Endothelial cell of umbilical vein (primary cell): ENCODE measurements at regions of chr4 and their contacts with region 1.

Region 1: DNA sequence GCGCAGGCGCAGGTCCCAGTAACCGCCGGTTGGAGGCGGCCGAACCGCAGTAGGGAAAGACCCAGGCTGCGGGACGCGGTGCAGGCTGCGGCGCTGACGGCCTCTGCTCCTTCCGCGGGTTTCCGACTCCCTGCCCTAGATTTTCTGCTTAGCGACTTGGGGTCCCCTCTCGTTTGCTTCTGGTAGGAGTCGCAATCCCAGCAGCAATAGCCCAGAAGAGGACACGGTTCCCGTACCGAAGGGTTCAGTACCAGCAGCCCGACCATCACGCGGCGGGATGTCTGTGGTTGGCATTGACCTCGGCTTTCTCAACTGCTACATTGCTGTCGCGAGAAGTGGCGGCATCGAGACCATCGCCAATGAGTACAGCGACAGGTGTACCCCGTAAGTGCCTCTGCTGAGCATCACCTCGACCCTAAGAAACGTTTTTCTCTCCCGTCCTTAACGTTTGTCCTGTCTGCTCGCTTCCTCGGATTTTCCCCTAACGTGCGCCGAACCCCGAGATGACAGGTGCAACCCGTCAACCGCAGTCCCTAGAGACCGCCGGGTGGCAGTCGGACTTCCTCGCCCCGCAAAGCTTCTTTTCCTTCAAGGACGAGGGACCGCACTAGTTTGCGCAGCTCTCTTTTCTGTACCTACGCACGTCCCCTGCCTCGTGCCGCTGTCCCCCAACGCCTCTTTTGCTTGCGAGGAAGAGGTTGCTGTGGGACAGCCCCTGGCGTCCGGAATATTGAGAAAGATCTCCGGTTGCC is at the start of gene HSPA4L:
- DNase-seq: peak; percentile 89
- H3K4me3 ChIP-seq: peak within 1 kb of the TSS; percentile 35 to 53 (median 53)
- H3K27ac ChIP-seq: peak within 1 kb of the TSS; percentile 50
- H3K4me1 ChIP-seq: peaks cover 2% of the 10 kb centered on the region
- H3K27me3 ChIP-seq: peaks cover 0 to 2% of the 10 kb centered on the region in 2 experiments
- CTCF ChIP-seq: peak in 1 of 2 donors; percentile 41
- POLR2A ChIP-seq: peak; percentile 68
- total RNA-seq, gene HSPA4L: 10.8 and 12.4 TPM in 2 replicates

Region 2: DNA sequence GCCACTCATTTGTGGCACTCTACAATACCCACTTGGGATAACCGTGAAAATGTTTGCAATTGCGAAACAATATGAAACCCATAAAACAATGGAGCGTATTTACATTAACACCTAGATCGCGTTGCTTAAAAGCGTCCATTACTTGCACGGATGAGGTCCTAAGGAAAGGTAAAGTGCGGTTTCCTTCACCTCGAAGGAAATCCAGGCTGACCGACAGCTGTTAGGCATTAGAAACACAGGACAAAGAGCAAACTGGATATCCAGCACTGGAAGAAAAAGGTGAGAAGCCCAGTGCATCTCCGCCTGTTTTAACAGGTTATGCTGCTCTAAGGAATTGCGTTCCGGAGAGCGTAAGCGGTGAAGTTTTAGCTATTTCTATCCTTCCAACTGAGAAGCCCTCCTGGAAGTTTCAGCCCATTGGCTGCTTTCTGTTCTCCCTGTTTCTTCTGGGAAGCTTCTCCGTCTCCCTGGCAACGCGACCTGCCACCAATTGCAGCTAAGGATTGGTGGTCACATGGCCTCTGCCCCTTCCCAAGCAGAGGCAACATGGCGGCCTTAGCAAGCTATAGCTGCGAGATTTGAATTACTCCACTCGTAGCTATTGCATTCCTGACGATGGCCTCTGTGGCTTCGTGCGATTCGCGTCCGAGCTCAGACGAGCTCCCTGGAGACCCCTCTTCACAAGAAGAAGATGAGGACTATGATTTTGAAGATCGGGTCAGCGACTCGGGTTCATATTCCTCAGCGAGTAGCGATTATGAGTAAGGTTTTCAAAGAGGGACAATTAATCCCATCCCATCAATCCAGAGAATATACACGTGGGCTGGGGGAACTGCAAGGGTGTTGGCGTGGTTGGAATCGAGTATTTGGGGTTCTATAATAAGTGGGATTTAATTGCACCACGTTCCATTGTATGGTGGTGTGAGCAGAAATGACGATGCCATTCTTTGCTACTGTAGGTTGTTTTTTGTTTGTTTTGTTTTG is 149.7 kb before region 1 on chr4 and contains the start of gene INTU:
- CTCF ChIA-PET with region 1: no interaction called
- POLR2A ChIA-PET with region 1: no interaction called
- dilution Hi-C with region 1: no loop called
- intact Hi-C with region 1: loop called (anchors 2 kb)
- DNase-seq: peak; percentile 97
- H3K4me3 ChIP-seq: peak within 1 kb of the TSS; percentile 65 to 93 (median 74)
- H3K27ac ChIP-seq: peak within 1 kb of the TSS; percentile 45
- H3K4me1 ChIP-seq: peaks cover 22% of the 10 kb centered on the region
- H3K27me3 ChIP-seq: no peaks in the 10 kb centered on the region
- CTCF ChIP-seq: no peak
- POLR2A ChIP-seq: peak; percentile 42
- total RNA-seq, gene INTU: 4.3 and 5.4 TPM in 2 replicates

Region 3: GRCh38 chr4:127880764-127881562 is 98.5 kb after region 1 on chr4 and contains the start of gene PLK4:
- CTCF ChIA-PET with region 1: interaction called, 7 read pairs
- POLR2A ChIA-PET with region 1: no interaction called
- dilution Hi-C with region 1: no loop called
- intact Hi-C with region 1: loop called (anchors 1 kb)
- DNase-seq: peak; percentile 97
- H3K4me3 ChIP-seq: peak within 1 kb of the TSS; percentile 92 to 97 (median 97)
- H3K27ac ChIP-seq: peak within 1 kb of the TSS; percentile 84
- H3K4me1 ChIP-seq: peaks cover 8% of the 10 kb centered on the region
- H3K27me3 ChIP-seq: no peaks in the 10 kb centered on the region
- CTCF ChIP-seq: no peak
- POLR2A ChIP-seq: peak; percentile 28
- total RNA-seq, gene PLK4: 34.8 and 37.7 TPM in 2 replicates

Region 4: GRCh38 chr4:127965062-127965802 is 182.8 kb after region 1 on chr4 and contains the starts of genes ABHD18 and MFSD8:
- CTCF ChIA-PET with region 1: interaction called, 14 read pairs
- POLR2A ChIA-PET with region 1: interaction called, 3 read pairs
- dilution Hi-C with region 1: no loop called
- intact Hi-C with region 1: loop called (anchors 1 kb)
- DNase-seq: peak; percentile 99
- H3K4me3 ChIP-seq: peak within 1 kb of the TSS; percentile 70 to 85 (median 71)
- H3K27ac ChIP-seq: peak within 1 kb of the TSS; percentile 62
- H3K4me1 ChIP-seq: peaks cover 8% of the 10 kb centered on the region
- H3K27me3 ChIP-seq: no peaks in the 10 kb centered on the region
- CTCF ChIP-seq: peak; percentile 32 to 61
- POLR2A ChIP-seq: peak; percentile 76
- total RNA-seq, gene ABHD18: 9.1 and 10.1 TPM in 2 replicates
- total RNA-seq, gene MFSD8: 19.4 and 21.3 TPM in 2 replicates